ENCODE measurements at regions of chr12 and their contacts with region 1.

Region 1: DNA sequence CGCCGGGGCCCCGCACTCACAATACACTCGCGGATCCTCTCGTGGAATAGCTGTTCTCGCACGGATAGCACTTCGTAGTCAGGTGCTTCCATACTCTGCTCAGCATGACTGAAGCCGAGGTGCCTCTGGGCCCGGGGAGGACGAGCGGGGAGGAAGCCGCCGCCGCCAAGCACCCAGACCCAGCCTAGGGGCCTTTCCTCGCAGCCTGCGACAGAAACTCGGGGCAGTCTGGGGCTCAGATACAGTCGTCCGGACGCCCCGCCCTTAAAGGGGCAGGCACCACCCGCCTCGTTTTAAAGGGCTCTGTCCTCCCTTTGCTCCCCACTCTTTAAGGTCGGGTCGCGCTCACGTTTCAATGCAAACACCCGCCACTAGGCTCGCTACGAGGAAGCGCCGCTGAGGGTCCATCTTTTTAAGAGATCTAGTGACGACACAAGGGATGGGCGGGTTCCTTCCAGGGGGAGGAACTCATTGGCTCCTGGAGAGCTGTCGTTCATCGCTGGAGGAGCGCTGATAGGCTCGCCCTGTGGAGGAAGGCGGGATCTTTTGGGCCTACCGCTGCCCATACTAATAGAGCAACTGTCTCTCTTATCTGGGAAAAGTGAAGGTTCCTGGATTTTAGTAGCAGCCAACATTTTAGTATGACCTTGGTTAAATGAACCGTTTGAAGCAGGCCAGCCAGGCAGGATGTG is at the start of gene LMBR1L:
- DNase-seq: peak; percentile 97 to 98
- H3K4me3 ChIP-seq: peak within 1 kb of the TSS; percentile 77
- H3K4me3 Mint-ChIP-seq: peak within 1 kb of the TSS; percentile 97
- H3K27ac Mint-ChIP-seq: peak within 1 kb of the TSS; percentile 89
- H3K4me1 ChIP-seq: peaks cover 14% of the 10 kb centered on the region
- H3K4me1 Mint-ChIP-seq: peaks cover 18% of the 10 kb centered on the region
- H3K27me3 ChIP-seq: no peaks in the 10 kb centered on the region
- H3K27me3 Mint-ChIP-seq: no peaks in the 10 kb centered on the region
- CTCF ChIP-seq: peak; percentile 25 to 62
- total RNA-seq, gene LMBR1L: 43.1 and 43.9 TPM in 2 replicates

Region 2: GRCh38 chr12:49088190-49088931 is 22.2 kb before region 1 on chr12:
- CTCF ChIA-PET with region 1: interaction called, 47 read pairs
- POLR2A ChIA-PET with region 1: interaction called, 3 read pairs
- intact Hi-C with region 1: loop called (anchors 1 kb)
- DNase-seq: peak; percentile 84
- H3K4me3 ChIP-seq: no peak overlapping the region
- H3K4me3 Mint-ChIP-seq: peak overlapping the region; percentile 50
- H3K27ac Mint-ChIP-seq: no peak overlapping the region
- H3K4me1 ChIP-seq: peaks cover 11% of the 10 kb centered on the region
- H3K4me1 Mint-ChIP-seq: no peaks in the 10 kb centered on the region
- H3K27me3 ChIP-seq: peaks cover 8% of the 10 kb centered on the region; the same call in 1 of the 2 replicates
- H3K27me3 Mint-ChIP-seq: peaks cover 19% of the 10 kb centered on the region
- CTCF ChIP-seq: peak; percentile 91 to 97

Region 3: GRCh38 chr12:49098035-49098451 is 12.6 kb before region 1 on chr12:
- CTCF ChIA-PET with region 1: interaction called, 40 read pairs
- POLR2A ChIA-PET with region 1: interaction called, 6 read pairs
- intact Hi-C with region 1: loop called (anchors 2 kb)
- DNase-seq: peak in 1 of 2 experiments; percentile 71
- H3K4me3 ChIP-seq: no peak overlapping the region
- H3K4me3 Mint-ChIP-seq: no peak overlapping the region
- H3K27ac Mint-ChIP-seq: no peak overlapping the region
- H3K4me1 ChIP-seq: no peaks in the 10 kb centered on the region; the same call in 1 of the 2 replicates
- H3K4me1 Mint-ChIP-seq: peaks cover 7% of the 10 kb centered on the region
- H3K27me3 ChIP-seq: peaks cover 8% of the 10 kb centered on the region; the same call in 1 of the 2 replicates
- H3K27me3 Mint-ChIP-seq: peaks cover 11% of the 10 kb centered on the region
- CTCF ChIP-seq: peak; percentile 78 to 90

Region 4: DNA sequence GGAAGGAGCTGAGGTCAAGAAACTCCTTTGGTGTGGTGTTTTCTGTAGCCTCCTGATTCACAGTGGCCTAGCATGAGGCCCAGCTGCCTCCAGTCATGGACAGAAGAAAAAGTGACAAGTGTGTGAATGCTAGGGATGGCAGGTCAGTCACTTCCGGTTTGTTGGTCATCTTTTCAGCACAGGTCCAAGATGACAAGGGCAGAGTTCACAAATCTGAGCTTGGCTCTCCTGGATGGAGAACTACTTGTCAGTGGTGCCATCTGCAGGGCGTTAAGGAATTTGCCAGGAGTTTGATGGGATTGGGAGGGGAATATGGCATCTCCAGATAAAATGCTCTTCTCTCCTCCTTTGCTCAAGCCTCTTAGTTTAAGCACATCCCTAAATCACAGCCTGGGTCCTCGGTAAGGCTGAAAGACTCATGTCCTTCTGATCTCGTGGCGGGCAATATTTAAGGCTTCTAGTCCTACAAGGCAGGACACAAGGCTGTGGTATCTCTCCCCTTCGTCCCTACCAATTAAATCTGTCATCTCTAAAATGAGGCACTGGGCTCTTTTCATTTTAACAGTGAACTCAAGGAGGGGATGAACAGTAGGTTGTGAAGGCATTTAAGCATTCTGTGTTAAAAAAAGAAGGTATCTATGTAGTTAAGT is 10.6 kb after region 1 on chr12:
- CTCF ChIA-PET with region 1: interaction called, 22 read pairs
- POLR2A ChIA-PET with region 1: interaction called, 4 read pairs
- intact Hi-C with region 1: loop called (anchors 1 kb)
- DNase-seq: peak; percentile 77 to 81
- H3K4me3 ChIP-seq: no peak overlapping the region
- H3K4me3 Mint-ChIP-seq: no peak overlapping the region
- H3K27ac Mint-ChIP-seq: no peak overlapping the region
- H3K4me1 ChIP-seq: no peaks in the 10 kb centered on the region
- H3K4me1 Mint-ChIP-seq: no peaks in the 10 kb centered on the region
- H3K27me3 ChIP-seq: no peaks in the 10 kb centered on the region
- H3K27me3 Mint-ChIP-seq: no peaks in the 10 kb centered on the region
- CTCF ChIP-seq: peak; percentile 77 to 78

Region 5: GRCh38 chr12:49130151-49131050 is 19.8 kb after region 1 on chr12:
- CTCF ChIA-PET with region 1: interaction called, 26 read pairs
- POLR2A ChIA-PET with region 1: interaction called, 24 read pairs
- intact Hi-C with region 1: loop called (anchors 1 kb)
- DNase-seq: peak; percentile 94 to 96
- H3K4me3 ChIP-seq: peak overlapping the region; percentile 88
- H3K4me3 Mint-ChIP-seq: peak overlapping the region; percentile 74
- H3K27ac Mint-ChIP-seq: peak overlapping the region; percentile 99
- H3K4me1 ChIP-seq: peaks cover 8% of the 10 kb centered on the region
- H3K4me1 Mint-ChIP-seq: peaks cover 10% of the 10 kb centered on the region
- H3K27me3 ChIP-seq: no peaks in the 10 kb centered on the region
- H3K27me3 Mint-ChIP-seq: no peaks in the 10 kb centered on the region
- CTCF ChIP-seq: peak; percentile 92 to 95

Region 6: GRCh38 chr12:49232940-49233841 is 122.6 kb after region 1 on chr12:
- CTCF ChIA-PET with region 1: interaction called, 14 read pairs
- POLR2A ChIA-PET with region 1: interaction called, 5 read pairs
- intact Hi-C with region 1: no loop called
- DNase-seq: no peak
- H3K4me3 ChIP-seq: no peak overlapping the region
- H3K4me3 Mint-ChIP-seq: peak overlapping the region; percentile 82
- H3K27ac Mint-ChIP-seq: peak overlapping the region; percentile 47
- H3K4me1 ChIP-seq: no peaks in the 10 kb centered on the region; the same call in 1 of the 2 replicates
- H3K4me1 Mint-ChIP-seq: peaks cover 13% of the 10 kb centered on the region
- H3K27me3 ChIP-seq: no peaks in the 10 kb centered on the region
- H3K27me3 Mint-ChIP-seq: peaks cover 2% of the 10 kb centered on the region
- CTCF ChIP-seq: no peak